PC-3 (cell line): ENCODE measurements at regions of chr5 and their contacts with region 1.

Region 1: GRCh38 chr5:143314659-143315058 is 88.8 kb downstream of the NR3C1 start:
- DNase-seq: peak; percentile 71
- ATAC-seq: peak; percentile 42
- H3K4me3 ChIP-seq: no peak overlapping the region
- H3K27ac ChIP-seq: peak overlapping the region; percentile 89
- H3K4me1 ChIP-seq: peaks cover 81% of the 10 kb centered on the region
- H3K27me3 ChIP-seq: no peaks in the 10 kb centered on the region
- CTCF ChIP-seq: no peak

Region 2: DNA sequence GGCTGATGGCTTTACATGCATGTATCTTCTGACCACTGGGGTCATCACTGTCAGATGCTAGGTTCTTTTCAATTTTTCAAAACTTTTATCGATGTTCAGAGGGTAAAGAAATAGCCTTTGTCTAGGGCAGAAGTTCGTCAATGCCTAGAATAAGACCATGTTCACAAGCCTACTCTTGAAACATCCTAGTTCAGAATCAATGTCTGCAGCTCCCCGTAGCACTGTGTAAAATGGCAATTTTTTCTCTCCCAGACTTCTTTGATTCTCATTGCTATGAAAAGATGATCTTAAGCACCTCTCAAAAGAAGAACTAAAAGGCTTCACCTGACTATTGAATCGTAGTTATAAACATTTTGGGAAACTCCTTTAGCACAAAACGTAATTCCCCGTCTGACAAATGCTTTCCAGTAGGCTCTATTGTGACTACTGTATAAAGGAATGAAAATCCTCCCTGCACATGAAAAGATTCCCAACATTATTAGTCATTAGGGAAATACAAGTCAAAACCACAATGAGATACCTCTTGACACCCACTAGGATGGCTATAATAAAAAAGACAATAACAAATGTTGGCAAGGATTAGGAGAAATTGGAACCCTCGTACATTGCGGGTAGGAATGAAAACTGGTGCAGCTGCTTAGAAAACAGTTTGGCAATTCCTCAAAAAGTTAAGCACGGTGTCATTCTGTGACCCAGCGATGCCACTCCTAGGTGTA is 281.0 kb before region 1 on chr5:
- CTCF ChIA-PET with region 1: no interaction called
- POLR2A ChIA-PET with region 1: interaction called, 5 read pairs
- intact Hi-C with region 1: loop called (anchors 10 kb)
- DNase-seq: peak; percentile 90
- ATAC-seq: peak; percentile 85
- H3K4me3 ChIP-seq: no peak overlapping the region
- H3K27ac ChIP-seq: peak overlapping the region; percentile 89
- H3K4me1 ChIP-seq: peaks cover 39% of the 10 kb centered on the region
- H3K27me3 ChIP-seq: no peaks in the 10 kb centered on the region
- CTCF ChIP-seq: no peak

Region 3: DNA sequence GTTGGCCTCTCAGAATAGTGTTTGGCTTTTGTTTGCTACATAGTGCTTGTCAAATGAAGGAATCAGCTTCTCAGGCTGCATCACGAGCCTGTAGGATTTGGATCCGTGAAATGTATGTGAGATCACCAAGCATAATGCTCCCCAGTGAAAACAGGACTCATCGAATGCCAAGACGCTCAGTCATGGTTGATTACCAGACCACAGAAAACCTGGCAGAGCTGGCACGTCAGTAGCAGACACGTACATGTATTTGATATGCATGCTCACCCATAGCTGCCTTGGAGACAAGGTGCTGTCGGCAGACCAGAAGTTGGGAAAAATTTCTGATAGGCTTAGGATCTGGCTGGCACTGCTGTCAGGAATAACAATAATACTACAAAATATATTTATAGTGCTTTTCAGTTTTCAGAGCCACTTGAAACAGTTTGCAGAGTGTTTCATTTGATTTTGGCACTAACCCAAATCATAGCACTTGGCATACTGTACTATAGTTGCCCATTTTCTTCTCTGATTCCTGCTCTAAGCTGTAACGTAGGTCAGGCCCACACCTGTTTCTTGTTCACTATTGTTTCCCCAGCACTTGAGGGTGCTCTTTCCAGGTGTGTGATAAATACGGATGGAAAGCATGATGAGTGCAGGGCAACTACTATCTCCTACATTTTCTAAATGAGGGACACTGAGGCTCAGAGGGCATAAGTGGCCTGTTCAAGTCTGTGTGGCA is 137.2 kb before region 1 on chr5:
- CTCF ChIA-PET with region 1: no interaction called
- POLR2A ChIA-PET with region 1: no interaction called
- intact Hi-C with region 1: loop called (anchors 2 kb)
- DNase-seq: peak; percentile 95
- ATAC-seq: peak; percentile 98
- H3K4me3 ChIP-seq: no peak overlapping the region
- H3K27ac ChIP-seq: peak overlapping the region; percentile 83
- H3K4me1 ChIP-seq: peaks cover 22% of the 10 kb centered on the region
- H3K27me3 ChIP-seq: no peaks in the 10 kb centered on the region
- CTCF ChIP-seq: no peak

Region 4: GRCh38 chr5:143195491-143195890 is 119.2 kb before region 1 on chr5:
- CTCF ChIA-PET with region 1: no interaction called
- POLR2A ChIA-PET with region 1: no interaction called
- intact Hi-C with region 1: loop called (anchors 5 kb)
- DNase-seq: no peak
- ATAC-seq: no peak
- H3K4me3 ChIP-seq: no peak overlapping the region
- H3K27ac ChIP-seq: no peak overlapping the region
- H3K4me1 ChIP-seq: no peaks in the 10 kb centered on the region; the same call in 1 of the 2 replicates
- H3K27me3 ChIP-seq: no peaks in the 10 kb centered on the region
- CTCF ChIP-seq: no peak

Region 5: DNA sequence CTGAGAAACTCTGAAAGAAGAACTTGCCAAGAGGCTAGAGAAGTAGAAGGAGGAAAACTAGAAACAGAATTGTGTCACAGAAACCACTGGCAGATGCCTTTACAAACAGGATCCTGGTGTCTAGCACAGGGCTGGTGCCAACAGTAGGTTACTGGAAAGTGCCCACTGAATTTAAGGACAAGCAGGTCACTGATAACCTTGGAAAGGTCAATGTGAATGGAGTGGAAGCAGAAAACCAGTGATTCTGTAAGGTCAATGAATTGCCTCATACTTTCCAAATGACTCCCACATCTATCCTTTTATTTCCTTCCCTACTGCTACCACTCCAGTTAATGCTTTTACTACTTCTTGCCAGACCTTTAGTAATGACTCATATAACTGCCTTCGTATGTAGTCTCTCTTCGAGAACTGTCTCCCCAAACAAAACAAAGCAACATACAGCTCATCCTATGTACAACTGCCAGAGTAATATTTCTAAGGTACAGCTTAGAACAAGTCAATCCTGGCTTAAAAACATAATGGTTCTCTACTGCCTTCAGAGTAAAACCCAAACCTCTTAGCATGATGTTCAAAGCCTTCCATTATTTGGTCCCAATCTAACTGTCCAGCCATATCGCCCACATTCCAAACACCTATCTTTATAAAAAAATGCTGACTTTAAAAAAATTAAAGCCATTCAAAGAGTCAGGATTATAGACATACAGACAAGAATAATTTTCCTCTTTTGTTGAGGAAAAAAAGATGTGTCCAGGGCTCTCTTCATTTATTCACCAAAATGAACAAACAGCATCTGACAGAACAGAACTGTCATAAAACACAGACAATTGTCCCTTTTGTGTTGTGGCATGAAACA is 36.3 kb after region 1 on chr5:
- CTCF ChIA-PET with region 1: no interaction called
- POLR2A ChIA-PET with region 1: interaction called, 4 read pairs
- intact Hi-C with region 1: loop called (anchors 5 kb)
- DNase-seq: peak; percentile 56
- ATAC-seq: peak; percentile 78
- H3K4me3 ChIP-seq: no peak overlapping the region
- H3K27ac ChIP-seq: no peak overlapping the region
- H3K4me1 ChIP-seq: peaks cover 27% of the 10 kb centered on the region
- H3K27me3 ChIP-seq: no peaks in the 10 kb centered on the region
- CTCF ChIP-seq: no peak

Region 6: GRCh38 chr5:143685246-143685802 is 370.7 kb after region 1 on chr5:
- CTCF ChIA-PET with region 1: no interaction called
- POLR2A ChIA-PET with region 1: no interaction called
- intact Hi-C with region 1: loop called (anchors 10 kb)
- DNase-seq: peak; percentile 25
- ATAC-seq: no peak; the same call in 1 of the 2 replicates
- H3K4me3 ChIP-seq: no peak overlapping the region
- H3K27ac ChIP-seq: no peak overlapping the region
- H3K4me1 ChIP-seq: peaks cover 14% of the 10 kb centered on the region
- H3K27me3 ChIP-seq: no peaks in the 10 kb centered on the region
- CTCF ChIP-seq: peak; percentile 58